Activated CD4-positive, alpha-beta memory T cell treated with anti-CD3 and anti-CD28 coated beads for 36 hours (primary cell): ENCODE measurements at regions of chr1 and their contacts with region 1.

Region 1: GRCh38 chr1:205775015-205775716 is at the start of gene RAB29:
- DNase-seq: peak; percentile 91
- H3K4me3 Mint-ChIP-seq: peak within 1 kb of the TSS; percentile 84
- H3K27ac Mint-ChIP-seq: peak within 1 kb of the TSS; percentile 94
- H3K4me1 Mint-ChIP-seq: peaks cover 52% of the 10 kb centered on the region
- H3K27me3 Mint-ChIP-seq: no peaks in the 10 kb centered on the region
- total RNA-seq, gene RAB29: 31.5 to 31.6 TPM

Region 2: DNA sequence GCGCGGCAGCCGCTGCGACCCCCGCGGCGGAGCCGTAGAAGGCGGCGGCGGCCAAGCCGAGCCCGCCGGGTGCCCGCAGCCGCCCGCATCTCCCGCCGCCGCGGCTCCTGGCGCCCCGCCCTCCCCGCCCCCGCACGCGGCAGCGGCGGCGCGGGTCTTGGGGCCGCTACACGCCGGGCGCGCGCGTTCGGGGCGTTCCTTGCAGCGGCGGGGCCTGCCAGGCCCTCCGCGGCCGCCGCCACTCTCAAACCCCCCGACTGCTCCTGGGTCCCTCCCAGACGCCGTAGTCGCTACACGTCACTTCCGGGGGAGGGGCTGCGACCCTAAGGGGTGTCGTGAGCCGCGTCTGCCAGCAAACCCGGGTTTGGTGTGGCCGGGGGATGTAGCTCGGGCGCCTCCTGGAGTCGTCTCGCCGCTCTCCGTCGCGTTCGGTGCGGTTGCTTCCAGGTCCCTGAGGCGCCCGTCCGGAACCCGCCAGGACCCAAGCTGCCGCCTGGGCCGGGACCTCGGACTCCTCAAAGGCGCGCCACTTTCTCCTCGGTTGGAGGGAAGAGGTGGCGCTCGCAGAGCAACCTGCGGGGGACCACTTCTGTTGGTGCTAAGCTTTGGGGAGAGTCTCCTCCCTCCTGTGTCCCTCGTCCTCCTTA is 143.3 kb before region 1 on chr1 and contains the start of gene ELK4:
- CTCF ChIA-PET with region 1: interaction called, 3 read pairs
- POLR2A ChIA-PET with region 1: interaction called, 3 read pairs
- intact Hi-C with region 1: loop called (anchors 1 kb)
- DNase-seq: peak; percentile 100
- H3K4me3 Mint-ChIP-seq: peak within 1 kb of the TSS; percentile 85
- H3K27ac Mint-ChIP-seq: peak within 1 kb of the TSS; percentile 90
- H3K4me1 Mint-ChIP-seq: peaks cover 34% of the 10 kb centered on the region
- H3K27me3 Mint-ChIP-seq: no peaks in the 10 kb centered on the region
- total RNA-seq, gene ELK4: 60.7 to 65.8 TPM

Region 3: DNA sequence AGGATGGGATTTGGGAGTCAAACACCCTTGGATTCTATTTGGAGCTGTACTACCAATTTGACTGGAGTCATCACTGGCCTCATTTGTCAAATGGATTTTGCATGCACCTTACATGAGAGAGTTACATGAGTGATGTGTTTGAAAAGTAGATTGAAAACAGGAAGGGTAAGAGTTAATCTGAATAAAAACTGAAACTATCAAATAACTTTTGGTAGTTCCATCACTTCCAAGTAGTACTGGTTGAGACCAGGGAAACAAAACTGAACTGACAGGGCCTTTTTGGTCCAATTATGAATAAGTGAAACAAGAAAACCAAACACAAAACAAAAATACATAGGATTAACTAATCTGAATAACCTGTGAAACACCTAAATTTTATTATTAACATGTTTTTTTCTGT is 55.4 kb before region 1 on chr1:
- CTCF ChIA-PET with region 1: no interaction called
- POLR2A ChIA-PET with region 1: no interaction called
- intact Hi-C with region 1: loop called (anchors 2 kb)
- DNase-seq: no peak
- H3K4me3 Mint-ChIP-seq: no peak overlapping the region
- H3K27ac Mint-ChIP-seq: peak overlapping the region; percentile 86
- H3K4me1 Mint-ChIP-seq: peaks cover 30% of the 10 kb centered on the region
- H3K27me3 Mint-ChIP-seq: no peaks in the 10 kb centered on the region

Region 4: GRCh38 chr1:205763980-205764379 is 11.2 kb before region 1 on chr1:
- CTCF ChIA-PET with region 1: interaction called, 4 read pairs
- POLR2A ChIA-PET with region 1: interaction called, 7 read pairs
- intact Hi-C with region 1: loop called (anchors 1 kb)
- DNase-seq: no peak
- H3K4me3 Mint-ChIP-seq: no peak overlapping the region
- H3K27ac Mint-ChIP-seq: no peak overlapping the region
- H3K4me1 Mint-ChIP-seq: peaks cover 24% of the 10 kb centered on the region
- H3K27me3 Mint-ChIP-seq: no peaks in the 10 kb centered on the region

Region 5: GRCh38 chr1:205798600-205798999 is 23.4 kb after region 1 on chr1:
- CTCF ChIA-PET with region 1: no interaction called
- POLR2A ChIA-PET with region 1: no interaction called
- intact Hi-C with region 1: no loop called
- DNase-seq: no peak
- H3K4me3 Mint-ChIP-seq: no peak overlapping the region
- H3K27ac Mint-ChIP-seq: no peak overlapping the region
- H3K4me1 Mint-ChIP-seq: peaks cover 2% of the 10 kb centered on the region
- H3K27me3 Mint-ChIP-seq: no peaks in the 10 kb centered on the region

Region 6: DNA sequence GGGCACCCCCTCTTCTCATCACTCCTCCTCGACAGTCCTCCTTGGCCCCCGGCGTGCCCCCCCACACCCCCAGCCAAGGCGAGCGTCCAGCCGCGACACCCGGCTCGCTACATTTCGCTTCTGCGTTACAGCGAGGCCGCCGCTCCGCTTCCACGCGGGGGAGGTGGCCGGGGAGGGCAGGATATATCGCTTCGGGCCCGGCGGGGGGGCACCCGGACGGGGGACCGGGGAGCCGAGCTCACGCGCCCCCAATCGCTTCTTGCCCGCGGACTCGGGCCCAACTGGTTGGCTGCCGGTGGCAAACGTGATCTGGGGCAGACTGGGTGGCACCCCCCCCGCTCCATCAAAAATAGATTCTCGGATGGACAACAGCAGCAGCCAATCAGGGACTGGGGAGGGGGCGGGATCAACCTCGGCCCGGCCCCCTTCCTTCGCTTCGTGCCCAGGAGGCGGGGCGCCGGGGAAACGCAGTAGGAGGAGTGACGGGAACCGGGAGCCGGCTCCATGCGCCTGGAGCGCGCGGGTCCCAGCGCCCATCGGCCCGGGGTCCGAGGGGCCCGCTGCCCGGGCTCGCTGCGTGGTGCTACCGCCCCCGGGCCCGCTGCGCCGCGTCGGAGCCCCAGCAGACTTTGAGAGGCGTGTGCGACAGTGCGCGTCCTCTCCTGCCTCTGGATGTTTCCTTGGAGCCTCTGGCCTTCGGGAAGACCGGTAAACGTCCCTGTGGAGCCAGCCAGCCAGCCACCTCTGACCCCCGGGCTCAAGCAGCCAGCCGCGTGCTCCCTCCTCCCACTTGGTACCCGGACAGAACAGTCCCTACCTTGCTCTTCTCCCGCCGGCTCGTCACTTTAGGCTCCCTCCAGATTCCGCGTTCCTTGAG is 38.0 kb after region 1 on chr1 and contains the start of gene SLC41A1:
- CTCF ChIA-PET with region 1: no interaction called
- POLR2A ChIA-PET with region 1: interaction called, 4 read pairs
- intact Hi-C with region 1: loop called (anchors 1 kb)
- DNase-seq: peak; percentile 94
- H3K4me3 Mint-ChIP-seq: peak within 1 kb of the TSS; percentile 89
- H3K27ac Mint-ChIP-seq: peak within 1 kb of the TSS; percentile 80
- H3K4me1 Mint-ChIP-seq: peaks cover 52% of the 10 kb centered on the region
- H3K27me3 Mint-ChIP-seq: no peaks in the 10 kb centered on the region
- total RNA-seq, gene SLC41A1: 34.9 to 35.0 TPM

Region 7: GRCh38 chr1:205870236-205870635 is 95.1 kb after region 1 on chr1:
- CTCF ChIA-PET with region 1: no interaction called
- POLR2A ChIA-PET with region 1: no interaction called
- intact Hi-C with region 1: no loop called
- DNase-seq: no peak
- H3K4me3 Mint-ChIP-seq: no peak overlapping the region
- H3K27ac Mint-ChIP-seq: no peak overlapping the region
- H3K4me1 Mint-ChIP-seq: no peaks in the 10 kb centered on the region
- H3K27me3 Mint-ChIP-seq: no peaks in the 10 kb centered on the region

Region 8: DNA sequence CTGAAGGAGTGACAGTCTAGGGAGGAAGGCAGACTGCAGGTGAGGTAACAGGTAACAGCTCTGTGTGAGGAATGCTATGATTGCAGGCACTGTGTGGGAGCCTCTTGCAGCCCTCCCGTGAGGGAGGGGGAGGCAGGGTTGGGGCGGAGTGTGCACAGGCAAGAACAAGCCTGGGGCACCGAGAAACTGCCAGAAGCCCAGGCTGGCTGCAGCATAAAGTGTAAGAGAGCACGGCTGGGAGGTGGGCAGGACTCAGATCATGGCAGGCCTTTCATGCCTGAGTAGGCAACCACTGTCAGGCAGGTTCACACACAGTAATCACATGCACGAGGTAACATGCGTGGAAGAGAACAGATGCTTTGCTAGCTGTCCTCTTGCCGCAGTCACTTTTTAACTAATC is 266.5 kb after region 1 on chr1:
- CTCF ChIA-PET with region 1: no interaction called
- POLR2A ChIA-PET with region 1: no interaction called
- intact Hi-C with region 1: no loop called
- DNase-seq: no peak
- H3K4me3 Mint-ChIP-seq: no peak overlapping the region
- H3K27ac Mint-ChIP-seq: no peak overlapping the region
- H3K4me1 Mint-ChIP-seq: peaks cover 13% of the 10 kb centered on the region
- H3K27me3 Mint-ChIP-seq: peaks cover 2% of the 10 kb centered on the region